BJ (cell line): ENCODE measurements at regions of chr7 and their contacts with region 1.

Region 1: GRCh38 chr7:143214789-143215679 is 6.8 kb upstream of the TAS2R40 start:
- DNase-seq: peak; percentile 39
- H3K4me3 ChIP-seq: no peak overlapping the region
- H3K27me3 ChIP-seq: no peaks in the 10 kb centered on the region
- CTCF ChIP-seq: peak; percentile 99

Region 2: GRCh38 chr7:142804728-142805207 is 410.3 kb before region 1 on chr7:
- CTCF ChIA-PET with region 1: no interaction called
- POLR2A ChIA-PET with region 1: no interaction called
- DNase-seq: no peak
- H3K4me3 ChIP-seq: no peak overlapping the region
- H3K27me3 ChIP-seq: peaks cover 3% of the 10 kb centered on the region
- CTCF ChIP-seq: no peak

Region 3: GRCh38 chr7:142873281-142873787 is 341.7 kb before region 1 on chr7:
- CTCF ChIA-PET with region 1: interaction called, 13 read pairs
- POLR2A ChIA-PET with region 1: no interaction called
- DNase-seq: no peak
- H3K4me3 ChIP-seq: no peak overlapping the region
- H3K27me3 ChIP-seq: no peaks in the 10 kb centered on the region
- CTCF ChIP-seq: peak; percentile 46

Region 4: DNA sequence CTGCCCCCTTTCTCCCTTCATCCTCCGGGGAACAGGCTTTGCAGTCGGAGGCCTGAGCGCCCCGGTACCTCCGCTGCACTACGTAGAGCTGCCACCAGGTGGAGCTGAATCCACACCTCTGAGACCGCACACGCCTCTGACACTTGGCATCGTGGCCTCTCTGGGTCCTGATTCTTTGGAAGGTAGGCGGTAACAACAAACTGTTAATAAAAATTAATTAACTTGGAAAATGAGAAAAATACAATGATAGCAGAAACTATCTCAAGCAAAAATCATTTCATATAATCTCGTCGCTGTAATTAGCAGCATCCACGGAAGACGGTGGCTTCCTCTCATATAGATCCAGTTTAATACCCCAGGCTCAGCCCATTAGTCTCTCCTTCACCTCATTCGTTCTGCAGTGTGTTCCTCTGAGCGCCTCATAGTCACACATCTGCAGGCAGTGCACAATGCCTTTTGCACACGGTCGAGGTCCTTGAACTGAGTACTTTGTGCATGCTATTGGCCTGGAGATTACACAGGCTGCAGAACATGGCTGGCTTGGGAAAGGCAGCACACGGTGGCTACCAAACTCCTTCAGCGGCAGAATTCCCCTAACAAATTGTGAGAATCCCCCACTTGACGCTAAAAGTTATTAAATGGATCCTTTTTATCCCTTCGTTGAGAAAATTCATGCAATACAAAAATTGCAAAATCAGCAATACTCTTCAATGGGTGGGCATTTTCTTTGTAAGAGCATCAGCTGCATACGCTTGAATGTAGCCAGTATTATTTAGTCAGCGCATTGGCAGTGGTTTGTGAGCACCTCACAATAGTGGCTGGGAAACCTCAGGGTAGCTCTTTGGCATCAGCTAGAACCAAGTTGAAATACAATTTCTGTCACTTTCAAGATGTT is 206.8 kb before region 1 on chr7:
- CTCF ChIA-PET with region 1: interaction called, 392 read pairs
- POLR2A ChIA-PET with region 1: no interaction called
- DNase-seq: no peak
- H3K4me3 ChIP-seq: no peak overlapping the region
- H3K27me3 ChIP-seq: no peaks in the 10 kb centered on the region
- CTCF ChIP-seq: peak; percentile 96

Region 5: DNA sequence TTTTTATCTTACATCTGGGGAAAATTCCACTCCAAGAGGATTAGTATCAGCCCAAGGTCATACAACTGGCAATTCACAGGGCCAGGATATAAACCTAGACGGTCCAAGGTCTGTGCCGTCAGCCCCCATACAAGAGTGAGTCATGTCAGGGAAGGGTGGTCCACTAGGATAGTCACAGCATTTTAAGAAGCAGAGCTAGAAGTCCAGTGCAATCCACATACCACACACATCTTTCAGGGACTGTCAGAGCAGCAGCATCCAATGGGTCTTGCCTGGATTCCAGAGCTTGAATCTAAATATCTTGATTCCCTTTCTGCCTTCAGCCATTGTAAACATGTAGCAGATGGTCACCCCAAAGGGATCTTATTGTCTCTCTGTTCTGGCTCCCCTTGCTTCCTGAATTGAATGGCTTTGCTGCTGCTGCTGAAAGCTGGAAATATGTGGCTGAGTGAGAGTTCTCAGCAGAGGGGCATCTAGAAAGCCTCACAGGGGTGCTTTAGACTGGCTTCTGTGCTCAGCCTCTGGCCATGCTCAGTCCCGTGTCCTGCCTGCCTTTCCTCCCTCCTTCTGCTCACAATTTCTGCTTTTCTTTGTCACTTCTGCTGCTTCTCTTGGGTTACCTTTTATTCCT is 172.8 kb before region 1 on chr7:
- CTCF ChIA-PET with region 1: interaction called, 11 read pairs
- POLR2A ChIA-PET with region 1: no interaction called
- DNase-seq: no peak
- H3K4me3 ChIP-seq: no peak overlapping the region
- H3K27me3 ChIP-seq: no peaks in the 10 kb centered on the region
- CTCF ChIP-seq: no peak

Region 6: DNA sequence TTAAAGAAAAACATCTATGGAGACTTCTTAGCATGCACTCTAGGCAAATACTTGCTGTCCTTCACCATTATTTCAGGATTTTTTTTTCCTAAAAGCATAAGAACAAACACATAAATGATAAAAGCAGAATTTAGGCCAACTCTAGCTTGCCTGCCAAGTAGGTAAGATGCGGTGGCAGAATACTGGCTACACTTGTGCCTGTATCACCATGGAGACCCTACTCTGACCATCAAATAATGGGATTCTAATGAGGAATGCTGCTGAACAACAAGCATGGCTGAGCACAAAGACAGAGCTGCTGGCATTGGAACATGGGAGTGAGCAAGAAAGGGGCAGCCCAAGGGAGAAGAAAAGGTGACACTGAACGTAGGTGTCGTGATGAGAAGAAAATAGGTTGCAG is 11.6 kb before region 1 on chr7:
- CTCF ChIA-PET with region 1: interaction called, 12 read pairs
- POLR2A ChIA-PET with region 1: no interaction called
- DNase-seq: no peak
- H3K4me3 ChIP-seq: no peak overlapping the region
- H3K27me3 ChIP-seq: no peaks in the 10 kb centered on the region
- CTCF ChIP-seq: no peak

Region 7: GRCh38 chr7:143265017-143265693 is 50.1 kb after region 1 on chr7:
- CTCF ChIA-PET with region 1: no interaction called
- POLR2A ChIA-PET with region 1: no interaction called
- DNase-seq: no peak
- H3K4me3 ChIP-seq: no peak overlapping the region
- H3K27me3 ChIP-seq: no peaks in the 10 kb centered on the region
- CTCF ChIP-seq: no peak

Region 8: GRCh38 chr7:144037414-144038035 is 822.5 kb after region 1 on chr7:
- CTCF ChIA-PET with region 1: no interaction called
- POLR2A ChIA-PET with region 1: no interaction called
- DNase-seq: no peak
- H3K4me3 ChIP-seq: no peak overlapping the region
- H3K27me3 ChIP-seq: no peaks in the 10 kb centered on the region
- CTCF ChIP-seq: no peak